HCT116 (cell line): ENCODE measurements at regions of chr18 and their contacts with region 1.

Region 1: DNA sequence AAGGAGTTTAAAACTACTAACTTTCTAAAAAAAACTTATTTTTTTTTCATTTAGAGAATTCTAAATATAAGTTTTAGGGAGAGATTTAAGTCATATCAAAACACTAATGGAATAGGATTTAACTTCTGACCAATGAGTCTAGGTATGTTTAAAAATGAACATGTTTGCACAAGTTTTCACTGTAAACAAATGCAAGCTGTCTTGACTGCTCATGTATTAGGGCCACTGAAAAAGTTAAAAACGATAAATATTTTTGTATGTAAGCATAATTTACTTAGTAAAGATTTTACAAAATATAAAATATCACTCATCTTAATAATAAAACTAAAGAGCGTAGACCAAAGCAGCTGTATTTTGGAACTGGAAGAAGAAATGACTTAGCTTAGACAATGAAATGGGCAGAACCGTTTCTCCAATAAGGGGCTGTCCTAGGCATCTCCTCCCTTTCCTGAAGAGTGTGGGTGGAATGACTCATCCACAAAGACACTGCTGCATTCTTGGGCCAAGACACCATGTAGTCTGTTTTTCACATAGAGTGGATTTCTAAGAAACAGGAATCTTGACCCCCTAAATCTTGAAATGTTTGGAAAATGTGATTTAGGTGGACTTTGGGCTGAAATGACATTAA is 118.8 kb downstream of the MEP1B start:
- DNase-seq: peak; percentile 72
- ATAC-seq: peak; percentile 100
- H3K4me3 ChIP-seq: peak overlapping the region in 1 of 2 experiments; percentile 29; a peak in 2 of 4 replicates
- H3K27ac ChIP-seq: peak overlapping the region; percentile 30; the same call in 1 of the 2 replicates
- H3K4me1 ChIP-seq: peaks cover 8 to 13% of the 10 kb centered on the region in 2 experiments
- H3K27me3 ChIP-seq: no peaks in the 10 kb centered on the region
- CTCF ChIP-seq: no peak
- POLR2A ChIP-seq: no peak
- RAD21 ChIP-seq: no peak

Region 2: GRCh38 chr18:32289483-32290075 is 19.0 kb before region 1 on chr18:
- CTCF ChIA-PET with region 1: interaction called, 11 read pairs
- POLR2A ChIA-PET with region 1: no interaction called
- RAD21 ChIA-PET with region 1: no interaction called
- intact Hi-C with region 1: no loop called
- DNase-seq: peak; percentile 63
- ATAC-seq: peak; percentile 95
- H3K4me3 ChIP-seq: no peak overlapping the region
- H3K27ac ChIP-seq: no peak overlapping the region
- H3K4me1 ChIP-seq: peaks cover 0 to 2% of the 10 kb centered on the region in 2 experiments; a peak in 1 of 4 replicates
- H3K27me3 ChIP-seq: no peaks in the 10 kb centered on the region
- CTCF ChIP-seq: peak; percentile 72 to 82 (median 82); a peak in 5 of 6 replicates
- POLR2A ChIP-seq: no peak
- RAD21 ChIP-seq: peak; percentile 73